ENCODE measurements at regions of chr15 and their contacts with region 1.

Region 1: DNA sequence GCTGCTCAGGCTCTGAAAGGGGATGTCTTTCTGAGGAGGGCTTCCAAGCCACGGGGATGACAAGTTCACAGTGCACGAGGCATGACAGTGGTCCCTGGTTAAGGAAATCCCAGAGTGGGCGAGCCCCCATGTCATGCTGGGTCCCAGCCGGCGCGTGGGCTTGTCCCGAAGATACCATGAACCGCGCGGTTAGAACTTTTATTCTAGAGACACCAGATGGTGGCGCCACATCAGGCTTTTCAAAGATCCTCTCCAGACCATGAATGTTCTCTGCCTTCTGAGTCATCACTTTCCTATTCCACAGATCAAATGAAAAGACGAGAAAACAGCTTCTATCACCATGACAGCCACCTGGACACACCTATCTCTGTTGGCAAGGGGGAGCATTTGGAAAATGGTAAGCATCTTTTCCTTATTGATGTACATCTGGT is 227.8 kb upstream of the LYSMD4 start:
- DNase-seq: no peak
- ATAC-seq: peak; percentile 70

Region 2: GRCh38 chr15:100159436-100159835 is 198.4 kb after region 1 on chr15:
- intact Hi-C with region 1: loop called (anchors 5 kb)
- DNase-seq: no peak
- ATAC-seq: no peak

Region 3: DNA sequence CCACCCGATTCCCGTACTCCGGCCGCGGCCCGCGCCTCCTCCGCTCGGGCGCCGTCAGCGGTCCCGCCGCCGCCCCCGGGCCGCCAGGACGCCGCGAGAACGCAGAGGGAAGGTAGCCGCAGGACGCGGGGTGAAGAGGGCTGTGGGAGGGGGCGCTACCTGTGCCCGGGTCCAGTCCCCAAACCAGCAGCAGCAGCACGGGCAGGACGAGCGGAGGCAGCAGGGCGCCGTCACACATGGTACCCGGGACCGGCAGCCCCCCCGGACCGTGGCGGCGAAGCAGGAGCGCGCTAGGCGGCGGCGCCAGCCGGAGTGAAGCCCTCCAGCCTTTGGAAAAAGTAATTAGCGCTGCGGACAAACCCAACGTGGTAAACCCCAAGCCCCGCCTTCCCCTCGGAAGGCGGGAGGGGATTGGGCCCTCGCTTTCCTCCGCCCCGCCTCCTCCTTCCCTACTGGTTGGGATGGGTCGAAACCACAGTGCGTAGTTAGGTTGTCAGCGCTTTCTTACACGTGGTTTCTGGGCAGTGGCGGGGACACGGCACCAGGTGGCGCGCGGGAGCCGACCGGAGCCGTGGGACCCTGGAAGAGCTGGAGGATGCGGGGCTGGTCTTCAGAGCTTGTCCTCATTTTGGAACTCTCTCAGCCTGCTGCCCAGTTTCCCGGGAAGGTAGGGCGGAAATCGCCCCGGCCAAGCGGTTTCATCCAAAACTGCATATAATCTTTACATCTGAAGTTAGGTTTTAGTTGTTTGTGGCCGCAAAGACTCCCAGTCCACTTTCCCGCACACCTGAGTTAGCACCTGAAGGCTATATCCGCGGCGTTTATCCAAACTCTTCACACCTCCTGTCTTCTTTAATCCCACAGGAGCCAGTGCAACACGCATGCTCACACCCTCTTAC is 380.9 kb after region 1 on chr15 and contains the start of gene ADAMTS17:
- intact Hi-C with region 1: loop called (anchors 10 kb)
- DNase-seq: peak; percentile 96
- ATAC-seq: peak; percentile 99
- total RNA-seq, gene ADAMTS17: 1.4 TPM

Measured in Right ventricle myocardium inferior (tissue), 1 donor.